AG04450 (cell line): ENCODE measurements at regions of chrX and their contacts with region 1.

Region 1: GRCh38 chrX:84358271-84358670 is 144.0 kb downstream of the HDX start:
- DNase-seq: no peak
- H3K4me3 ChIP-seq: no peak overlapping the region
- H3K27ac ChIP-seq: no peak overlapping the region
- H3K27me3 ChIP-seq: no peaks in the 10 kb centered on the region
- CTCF ChIP-seq: no peak

Region 2: DNA sequence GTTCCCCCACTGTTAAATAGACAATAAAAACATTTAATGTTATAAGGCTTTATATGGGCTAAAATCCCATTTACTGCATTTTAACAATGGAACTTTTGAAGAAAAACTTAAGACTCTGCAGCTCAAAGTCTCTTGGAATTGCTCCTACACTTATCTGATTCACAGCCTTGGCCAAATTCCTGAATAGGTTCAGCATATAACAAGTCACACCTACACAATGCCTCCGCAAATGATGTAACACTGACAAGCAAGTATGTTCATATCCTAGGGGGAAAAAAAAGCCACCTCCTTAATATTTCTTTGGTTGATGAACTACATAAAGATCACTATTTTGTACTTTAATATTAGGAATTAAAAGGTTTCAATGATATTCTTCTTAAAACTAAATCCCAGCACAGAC is 204.7 kb before region 1 on chrX:
- CTCF ChIA-PET with region 1: no interaction called
- POLR2A ChIA-PET with region 1: no interaction called
- DNase-seq: no peak
- H3K4me3 ChIP-seq: no peak overlapping the region
- H3K27ac ChIP-seq: no peak overlapping the region
- H3K27me3 ChIP-seq: no peaks in the 10 kb centered on the region
- CTCF ChIP-seq: no peak

Region 3: GRCh38 chrX:84339507-84340364 is 18.5 kb before region 1 on chrX:
- CTCF ChIA-PET with region 1: interaction called, 20 read pairs
- POLR2A ChIA-PET with region 1: no interaction called
- DNase-seq: no peak
- H3K4me3 ChIP-seq: no peak overlapping the region
- H3K27ac ChIP-seq: no peak overlapping the region
- H3K27me3 ChIP-seq: no peaks in the 10 kb centered on the region
- CTCF ChIP-seq: peak; percentile 49